ENCODE measurements at regions of chr19 and their contacts with region 1.

Region 1: DNA sequence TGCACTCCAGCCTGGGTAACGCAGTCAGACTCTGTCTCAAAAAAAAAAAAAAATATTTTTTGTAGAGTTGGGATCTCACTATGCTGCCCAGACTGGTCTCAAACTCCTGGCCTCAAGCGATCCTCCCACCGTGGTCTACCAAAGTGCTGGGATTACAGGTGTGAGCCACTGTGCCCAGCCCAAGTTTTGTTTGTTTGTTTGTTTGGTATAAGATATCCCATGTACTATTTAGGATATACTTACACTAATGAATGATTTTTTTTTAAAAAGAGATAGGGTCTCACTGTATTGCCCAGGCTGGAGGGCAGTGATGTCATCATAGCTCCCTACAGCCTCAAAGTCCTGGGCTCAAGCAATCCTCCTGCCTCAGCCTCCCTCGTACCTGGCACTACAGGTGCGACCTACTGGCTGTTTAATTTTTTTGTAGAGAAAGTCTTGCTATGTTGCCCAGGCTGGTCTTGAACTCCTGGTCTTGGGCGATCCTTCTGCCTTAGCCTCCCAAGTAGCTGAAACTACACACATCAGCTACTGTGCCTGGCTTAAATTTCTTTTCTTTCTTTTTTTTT is 24.0 kb downstream of the TLE6 start:
- DNase-seq: no peak
- ATAC-seq: no peak
- H3K4me3 ChIP-seq: no peak overlapping the region
- H3K4me3 Mint-ChIP-seq: no peak overlapping the region
- H3K27ac ChIP-seq: no peak overlapping the region
- H3K27ac Mint-ChIP-seq: no peak overlapping the region
- H3K4me1 ChIP-seq: no peaks in the 10 kb centered on the region
- H3K4me1 Mint-ChIP-seq: no peaks in the 10 kb centered on the region
- H3K27me3 ChIP-seq: peaks cover 0 to 3% (median 0%) of the 10 kb centered on the region in 4 experiments
- H3K27me3 Mint-ChIP-seq: peaks cover 3% of the 10 kb centered on the region
- CTCF ChIP-seq: no peak

Region 2: GRCh38 chr19:3020321-3020960 is 19.1 kb after region 1 on chr19:
- CTCF ChIA-PET with region 1: no interaction called
- POLR2A ChIA-PET with region 1: interaction called, 15 read pairs
- intact Hi-C with region 1: no loop called
- DNase-seq: no peak
- ATAC-seq: no peak
- H3K4me3 ChIP-seq: no peak overlapping the region
- H3K4me3 Mint-ChIP-seq: no peak overlapping the region
- H3K27ac ChIP-seq: no peak overlapping the region
- H3K27ac Mint-ChIP-seq: no peak overlapping the region
- H3K4me1 ChIP-seq: peaks cover 10 to 11% of the 10 kb centered on the region in 2 donors
- H3K4me1 Mint-ChIP-seq: peaks cover 10% of the 10 kb centered on the region
- H3K27me3 ChIP-seq: peaks cover 0 to 16% (median 7%) of the 10 kb centered on the region in 4 experiments
- H3K27me3 Mint-ChIP-seq: peaks cover 26% of the 10 kb centered on the region
- CTCF ChIP-seq: no peak

Measured in B cell (primary cell).